ENCODE measurements at regions of chr12 and their contacts with region 1.

Region 1: GRCh38 chr12:10562306-10562933 is 51.0 kb downstream of the MAGOHB start:
- DNase-seq: peak in 1 of 2 donors; percentile 70
- H3K4me3 ChIP-seq: no peak overlapping the region
- H3K27ac ChIP-seq: no peak overlapping the region
- H3K4me1 ChIP-seq: no peaks in the 10 kb centered on the region
- H3K27me3 ChIP-seq: no peaks in the 10 kb centered on the region
- CTCF ChIP-seq: peak in 5 of 7 experiments; percentile 44 to 73 (median 58)
- EP300 ChIP-seq: no peak
- POLR2A ChIP-seq: no peak

Region 2: GRCh38 chr12:10235761-10236631 is 326.4 kb before region 1 on chr12:
- intact Hi-C with region 1: loop called (anchors 5 kb)
- DNase-seq: peak; percentile 31 to 77
- H3K4me3 ChIP-seq: no peak overlapping the region
- H3K27ac ChIP-seq: no peak overlapping the region
- H3K4me1 ChIP-seq: no peaks in the 10 kb centered on the region
- H3K27me3 ChIP-seq: no peaks in the 10 kb centered on the region
- CTCF ChIP-seq: peak in 5 of 7 experiments; percentile 57 to 91 (median 80)
- EP300 ChIP-seq: no peak
- POLR2A ChIP-seq: no peak

Region 3: DNA sequence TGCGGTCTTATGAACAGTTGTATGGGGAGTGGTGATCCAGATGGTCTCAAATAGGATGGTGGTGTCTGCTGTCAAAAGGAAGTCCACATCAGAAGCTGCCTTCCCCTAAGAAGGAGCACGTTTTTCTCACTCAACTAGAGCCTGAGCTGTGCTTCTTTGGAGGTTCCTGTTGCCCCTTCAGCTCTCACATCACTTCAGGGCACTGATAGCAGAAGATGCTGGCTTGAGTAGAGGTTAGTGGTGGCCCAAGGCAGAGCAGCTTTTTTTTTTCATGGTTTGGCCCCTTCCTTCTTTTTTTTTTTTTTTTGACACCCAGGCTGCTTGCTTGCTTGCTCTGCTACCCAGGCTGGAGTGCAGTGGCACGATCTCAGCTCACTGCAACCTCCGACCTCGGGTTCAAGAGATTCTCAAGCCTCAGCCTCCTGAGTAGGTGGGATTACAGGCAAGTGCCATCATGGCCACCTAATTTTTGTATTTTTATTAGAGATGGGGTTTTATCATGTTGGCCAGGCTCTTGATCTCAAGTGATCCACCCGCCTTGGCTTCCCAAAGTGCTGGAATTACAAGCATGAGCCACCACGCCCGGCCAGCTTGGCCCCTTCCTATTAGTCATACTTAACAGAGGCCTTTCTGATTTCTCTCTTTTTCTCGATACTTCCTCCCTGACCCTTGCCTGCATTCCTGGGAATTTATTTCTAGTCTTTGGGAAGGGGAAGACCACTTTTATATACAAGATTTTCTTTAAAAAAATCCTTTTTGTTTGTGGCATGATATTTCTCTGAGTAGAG is 223.2 kb before region 1 on chr12:
- intact Hi-C with region 1: loop called (anchors 5 kb)
- DNase-seq: no peak
- H3K4me3 ChIP-seq: no peak overlapping the region
- H3K27ac ChIP-seq: no peak overlapping the region
- H3K4me1 ChIP-seq: no peaks in the 10 kb centered on the region
- H3K27me3 ChIP-seq: no peaks in the 10 kb centered on the region
- CTCF ChIP-seq: no peak
- EP300 ChIP-seq: no peak
- POLR2A ChIP-seq: no peak

Region 4: DNA sequence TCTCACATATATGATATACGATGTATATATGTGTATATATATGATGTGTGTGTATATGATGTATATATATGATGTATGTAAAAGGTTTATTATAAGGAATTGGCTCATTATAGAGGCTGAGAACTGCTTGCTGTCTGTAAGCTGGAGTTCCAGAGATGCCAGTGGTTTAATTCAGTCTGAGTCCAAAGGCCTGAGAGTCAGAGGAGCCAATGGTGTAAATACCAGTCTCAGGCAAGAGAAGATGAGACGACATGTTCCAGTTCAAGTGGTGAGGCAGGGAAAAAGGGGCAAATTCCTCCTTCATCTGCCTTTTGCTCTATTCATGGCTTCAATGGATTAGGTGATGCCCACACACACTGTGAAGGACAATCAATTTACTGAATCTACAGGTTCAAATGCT is 128.5 kb after region 1 on chr12:
- intact Hi-C with region 1: no loop called
- DNase-seq: no peak
- H3K4me3 ChIP-seq: no peak overlapping the region
- H3K27ac ChIP-seq: no peak overlapping the region
- H3K4me1 ChIP-seq: no peaks in the 10 kb centered on the region
- H3K27me3 ChIP-seq: no peaks in the 10 kb centered on the region
- CTCF ChIP-seq: no peak
- EP300 ChIP-seq: no peak
- POLR2A ChIP-seq: no peak